H1 (cell line): ENCODE measurements at regions of chr13 and their contacts with region 1.

Region 1: GRCh38 chr13:94224670-94225069 is 254.8 kb downstream of the DCT start:
- DNase-seq: no peak
- H3K4me3 ChIP-seq: no peak overlapping the region
- H3K27ac ChIP-seq: no peak overlapping the region
- H3K4me1 ChIP-seq: no peaks in the 10 kb centered on the region
- H3K27me3 ChIP-seq: no peaks in the 10 kb centered on the region
- CTCF ChIP-seq: peak in 1 of 3 experiments; percentile 21; a peak in 1 of 4 replicates
- EP300 ChIP-seq: no peak
- POLR2A ChIP-seq: no peak
- RAD21 ChIP-seq: peak; percentile 14 to 29; a peak in 2 of 4 replicates

Region 2: GRCh38 chr13:94362411-94362909 is 137.8 kb after region 1 on chr13:
- CTCF ChIA-PET with region 1: interaction called, 10 read pairs
- POLR2A ChIA-PET with region 1: no interaction called
- DNase-seq: peak; percentile 49 to 65
- H3K4me3 ChIP-seq: no peak overlapping the region
- H3K27ac ChIP-seq: no peak overlapping the region
- H3K4me1 ChIP-seq: no peaks in the 10 kb centered on the region
- H3K27me3 ChIP-seq: no peaks in the 10 kb centered on the region
- CTCF ChIP-seq: peak; percentile 52 to 84 (median 70)
- EP300 ChIP-seq: no peak
- POLR2A ChIP-seq: no peak
- RAD21 ChIP-seq: peak; percentile 97 to 98